ENCODE measurements at regions of chr5 and their contacts with region 1.

Region 1: GRCh38 chr5:14871210-14872069 is at the start of gene ANKH:
- DNase-seq: peak; percentile 88
- ATAC-seq: peak; percentile 85
- total RNA-seq, gene ANKH: 156 TPM

Region 2: GRCh38 chr5:14925326-14925725 is 53.9 kb after region 1 on chr5:
- intact Hi-C with region 1: loop called (anchors 10 kb)
- DNase-seq: no peak
- ATAC-seq: no peak

Region 3: DNA sequence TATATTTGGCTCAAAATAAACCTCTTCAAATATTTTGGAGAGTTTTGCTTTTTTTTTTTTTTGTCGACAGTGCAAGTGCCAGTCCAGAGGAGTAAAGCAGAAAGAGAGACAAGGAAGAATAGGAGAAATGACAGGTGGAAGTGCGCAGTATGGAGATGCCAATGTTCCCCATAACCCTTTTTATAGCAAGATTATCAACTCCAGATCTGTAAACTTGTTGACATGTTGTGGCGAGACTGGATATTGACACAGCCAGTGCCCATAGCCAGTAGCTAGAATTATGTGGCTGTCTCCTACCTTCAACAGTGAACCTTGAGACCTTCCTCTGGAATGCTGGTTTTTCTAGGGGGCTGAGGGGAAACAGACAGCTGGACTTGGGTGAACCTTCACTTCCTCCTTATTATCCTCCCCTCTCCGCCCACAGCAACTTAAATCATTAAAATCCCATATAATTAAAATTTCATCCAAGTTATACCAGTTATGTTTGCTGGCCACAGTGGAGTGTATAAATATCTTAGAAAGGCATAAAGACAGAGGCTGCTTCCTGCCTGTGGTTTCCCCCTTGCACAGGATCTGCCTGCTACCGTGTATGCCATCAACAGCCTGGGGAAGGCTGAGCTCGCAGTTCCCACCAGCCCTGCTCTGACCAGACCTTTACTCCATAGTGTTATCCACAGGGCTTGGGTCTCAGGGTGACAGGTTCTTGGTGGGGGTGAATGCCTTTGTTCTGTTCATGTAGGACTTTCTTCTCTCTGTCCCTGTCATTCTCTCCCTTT is 112.4 kb after region 1 on chr5:
- intact Hi-C with region 1: no loop called
- DNase-seq: no peak
- ATAC-seq: no peak